ENCODE measurements at regions of chr17 and their contacts with region 1.

Region 1: DNA sequence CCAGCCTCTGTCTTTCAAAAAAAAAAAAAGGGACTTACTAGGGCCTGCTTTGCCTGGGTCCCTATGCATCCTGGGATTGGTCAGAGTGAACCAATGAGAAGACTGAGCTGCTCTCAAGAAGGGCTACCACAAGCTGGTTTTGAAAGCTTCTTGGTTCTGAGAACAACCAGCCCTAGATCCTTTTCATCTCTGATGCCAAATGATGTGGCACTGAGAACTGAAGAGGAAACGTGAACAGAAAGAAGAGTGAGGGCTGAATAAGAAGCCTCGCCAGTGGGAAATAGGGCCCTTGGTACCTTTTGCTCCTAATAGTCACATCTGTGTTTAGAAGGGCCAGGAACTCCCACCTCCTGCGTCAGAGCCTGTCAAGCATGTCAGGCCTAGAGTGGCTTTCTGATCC is 10.7 kb downstream of the TACO1 start:
- DNase-seq: no peak
- ATAC-seq: no peak
- H3K4me3 ChIP-seq: no peak overlapping the region
- H3K4me3 Mint-ChIP-seq: no peak overlapping the region
- H3K27ac ChIP-seq: no peak overlapping the region
- H3K27ac Mint-ChIP-seq: no peak overlapping the region
- H3K4me1 ChIP-seq: no peaks in the 10 kb centered on the region
- H3K4me1 Mint-ChIP-seq: no peaks in the 10 kb centered on the region
- H3K27me3 ChIP-seq: no peaks in the 10 kb centered on the region
- H3K27me3 Mint-ChIP-seq: no peaks in the 10 kb centered on the region
- CTCF ChIP-seq: no peak

Region 2: GRCh38 chr17:63425482-63425881 is 185.9 kb before region 1 on chr17:
- CTCF ChIA-PET with region 1: interaction called, 158 read pairs
- POLR2A ChIA-PET with region 1: no interaction called
- intact Hi-C with region 1: no loop called
- DNase-seq: peak; percentile 82
- ATAC-seq: peak; percentile 81
- H3K4me3 ChIP-seq: no peak overlapping the region
- H3K4me3 Mint-ChIP-seq: no peak overlapping the region
- H3K27ac ChIP-seq: no peak overlapping the region
- H3K27ac Mint-ChIP-seq: no peak overlapping the region
- H3K4me1 ChIP-seq: peaks cover 0 to 5% of the 10 kb centered on the region in 2 donors
- H3K4me1 Mint-ChIP-seq: peaks cover 12% of the 10 kb centered on the region
- H3K27me3 ChIP-seq: no peaks in the 10 kb centered on the region
- H3K27me3 Mint-ChIP-seq: peaks cover 10% of the 10 kb centered on the region
- CTCF ChIP-seq: peak; percentile 100

Region 3: DNA sequence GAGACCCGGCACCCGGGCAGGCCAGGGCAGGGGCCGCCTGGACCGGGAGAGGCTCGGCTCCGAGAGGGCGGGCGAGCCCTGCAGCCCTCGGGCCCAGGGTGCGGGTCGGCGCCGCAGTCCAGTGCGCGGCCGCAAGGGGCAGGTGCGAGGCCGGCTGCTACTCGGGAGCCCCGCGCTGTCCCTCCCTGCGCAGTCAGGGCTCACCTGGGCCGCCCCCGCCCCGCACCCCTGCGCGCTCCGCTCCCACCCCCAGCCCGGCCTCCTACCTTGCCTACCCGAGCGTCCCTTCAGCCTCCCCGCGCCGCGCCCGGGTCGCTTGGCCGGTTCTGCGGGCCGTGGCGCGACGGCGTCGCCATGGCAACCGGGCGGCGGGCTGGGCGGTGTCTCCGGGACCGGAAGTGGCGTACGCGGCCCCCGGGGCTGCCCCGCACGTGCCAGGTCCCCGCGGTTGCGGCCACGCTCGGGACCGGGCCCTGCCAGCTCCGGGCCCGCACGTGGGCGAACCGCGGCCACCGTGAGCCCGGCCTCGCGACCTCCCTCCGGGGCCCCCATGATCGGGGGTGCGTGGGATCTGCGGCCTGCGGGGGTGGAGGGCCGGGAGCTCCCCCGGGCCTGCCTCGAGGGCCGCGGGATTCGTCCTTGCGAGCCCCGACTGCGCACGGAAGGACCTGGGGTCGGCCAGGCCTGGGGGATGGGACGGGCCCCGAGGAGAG is 165.2 kb before region 1 on chr17 and contains the start of gene CYB561:
- CTCF ChIA-PET with region 1: interaction called, 11 read pairs
- POLR2A ChIA-PET with region 1: no interaction called
- intact Hi-C with region 1: no loop called
- DNase-seq: peak; percentile 94
- ATAC-seq: peak; percentile 73
- H3K4me3 ChIP-seq: peak within 1 kb of the TSS in 4 of 5 experiments; percentile 54 to 70 (median 61)
- H3K4me3 Mint-ChIP-seq: peak within 1 kb of the TSS; percentile 77
- H3K27ac ChIP-seq: peak within 1 kb of the TSS; percentile 38 to 79
- H3K27ac Mint-ChIP-seq: peak within 1 kb of the TSS; percentile 81
- H3K4me1 ChIP-seq: peaks cover 13 to 24% of the 10 kb centered on the region in 2 donors
- H3K4me1 Mint-ChIP-seq: peaks cover 15% of the 10 kb centered on the region
- H3K27me3 ChIP-seq: peaks cover 0 to 2% (median 0%) of the 10 kb centered on the region in 4 experiments
- H3K27me3 Mint-ChIP-seq: peaks cover 6% of the 10 kb centered on the region
- CTCF ChIP-seq: peak; percentile 59
- total RNA-seq, gene CYB561: 3.6 and 4.9 TPM in 2 replicates

Region 4: DNA sequence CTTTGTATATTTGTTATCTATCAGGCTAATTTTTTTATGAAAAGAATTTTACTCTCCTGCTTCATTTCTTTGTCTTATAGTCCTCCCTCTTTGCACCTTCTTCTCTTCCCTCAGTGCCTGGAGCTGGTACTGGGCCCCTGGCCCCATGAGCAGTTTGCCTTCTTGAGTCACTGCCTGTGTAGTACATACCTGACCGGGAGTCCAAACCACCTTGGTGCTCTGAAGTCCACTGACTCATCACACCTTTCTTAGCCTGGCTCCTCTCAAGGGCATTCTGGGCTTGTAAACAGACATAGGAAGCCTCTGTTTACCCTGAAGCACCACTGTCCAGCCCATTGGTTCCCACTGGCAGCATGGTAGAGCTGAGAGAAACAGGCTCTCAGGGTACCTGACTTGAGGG is 21.7 kb before region 1 on chr17:
- CTCF ChIA-PET with region 1: interaction called, 13 read pairs
- POLR2A ChIA-PET with region 1: no interaction called
- intact Hi-C with region 1: no loop called
- DNase-seq: no peak
- ATAC-seq: no peak
- H3K4me3 ChIP-seq: no peak overlapping the region
- H3K4me3 Mint-ChIP-seq: no peak overlapping the region
- H3K27ac ChIP-seq: no peak overlapping the region
- H3K27ac Mint-ChIP-seq: no peak overlapping the region
- H3K4me1 ChIP-seq: no peaks in the 10 kb centered on the region
- H3K4me1 Mint-ChIP-seq: no peaks in the 10 kb centered on the region
- H3K27me3 ChIP-seq: no peaks in the 10 kb centered on the region
- H3K27me3 Mint-ChIP-seq: no peaks in the 10 kb centered on the region
- CTCF ChIP-seq: no peak

Region 5: DNA sequence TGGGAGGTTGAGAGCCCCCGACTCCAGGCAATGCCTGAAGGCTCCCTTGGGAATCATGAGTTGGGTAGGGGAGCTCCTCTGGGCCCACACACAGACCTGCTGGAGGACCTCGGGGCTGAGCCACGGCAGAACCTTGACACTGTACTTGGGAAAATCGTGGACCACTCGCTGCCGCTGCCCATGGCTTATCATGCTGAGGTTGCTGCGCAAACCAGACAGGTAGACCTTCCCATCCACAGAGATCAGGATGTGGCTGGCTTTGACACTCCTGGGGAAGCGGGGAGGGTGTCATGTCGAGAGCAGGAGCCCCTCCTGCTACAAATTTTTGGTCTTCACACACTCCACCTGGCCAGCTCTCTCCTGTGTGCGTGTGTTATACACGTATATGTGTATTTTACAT is 95.8 kb after region 1 on chr17:
- CTCF ChIA-PET with region 1: interaction called, 32 read pairs
- POLR2A ChIA-PET with region 1: interaction called, 3 read pairs
- intact Hi-C with region 1: loop called (anchors 1 kb)
- DNase-seq: no peak
- ATAC-seq: no peak
- H3K4me3 ChIP-seq: no peak overlapping the region
- H3K4me3 Mint-ChIP-seq: no peak overlapping the region
- H3K27ac ChIP-seq: peak overlapping the region in 1 of 2 donors; percentile 75
- H3K27ac Mint-ChIP-seq: peak overlapping the region; percentile 92
- H3K4me1 ChIP-seq: peaks cover 51 to 56% of the 10 kb centered on the region in 2 donors
- H3K4me1 Mint-ChIP-seq: peaks cover 67% of the 10 kb centered on the region
- H3K27me3 ChIP-seq: no peaks in the 10 kb centered on the region
- H3K27me3 Mint-ChIP-seq: no peaks in the 10 kb centered on the region
- CTCF ChIP-seq: no peak

Region 6: GRCh38 chr17:63785556-63785955 is 174.2 kb after region 1 on chr17:
- CTCF ChIA-PET with region 1: no interaction called
- POLR2A ChIA-PET with region 1: no interaction called
- intact Hi-C with region 1: no loop called
- DNase-seq: no peak
- ATAC-seq: no peak
- H3K4me3 ChIP-seq: no peak overlapping the region
- H3K4me3 Mint-ChIP-seq: no peak overlapping the region
- H3K27ac ChIP-seq: no peak overlapping the region
- H3K27ac Mint-ChIP-seq: no peak overlapping the region
- H3K4me1 ChIP-seq: peaks cover 0 to 6% of the 10 kb centered on the region in 2 donors
- H3K4me1 Mint-ChIP-seq: peaks cover 28% of the 10 kb centered on the region
- H3K27me3 ChIP-seq: no peaks in the 10 kb centered on the region
- H3K27me3 Mint-ChIP-seq: no peaks in the 10 kb centered on the region
- CTCF ChIP-seq: no peak

Region 7: DNA sequence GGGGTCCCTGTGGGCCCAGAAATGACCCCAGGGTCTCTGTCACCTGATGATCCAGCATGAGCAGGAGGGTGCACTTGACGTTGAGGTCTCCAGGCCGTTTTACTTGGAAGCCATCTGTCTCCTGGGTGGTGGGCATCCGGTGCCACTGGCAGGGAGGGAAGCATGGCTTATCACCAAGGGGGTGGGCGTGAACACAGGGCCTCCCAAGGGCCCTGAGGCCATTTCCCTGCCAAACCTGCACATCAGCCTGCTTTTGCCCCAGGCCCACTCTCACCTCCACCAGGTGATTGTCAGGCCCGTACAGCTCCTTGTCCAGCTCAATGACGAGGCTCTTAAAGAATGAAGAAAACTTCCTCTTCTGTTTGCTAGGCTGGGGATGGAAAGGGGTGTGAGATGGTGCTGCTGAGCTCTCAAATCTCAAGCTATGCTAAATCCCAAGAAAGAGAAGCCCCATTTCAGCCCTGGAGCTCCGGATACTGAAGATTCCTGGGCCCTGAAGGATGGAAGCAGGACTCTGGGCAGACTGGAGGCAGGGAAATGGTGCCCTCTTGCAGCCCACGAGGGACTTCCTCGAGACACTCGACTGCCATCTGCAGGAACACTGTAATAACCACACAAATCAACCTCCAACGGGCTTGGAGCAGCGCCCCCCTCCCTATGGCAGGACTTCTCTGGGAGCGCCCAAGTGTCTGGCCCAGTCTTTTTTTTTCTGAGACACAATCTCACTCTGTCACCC is 223.2 kb after region 1 on chr17:
- CTCF ChIA-PET with region 1: interaction called, 12 read pairs
- POLR2A ChIA-PET with region 1: no interaction called
- intact Hi-C with region 1: no loop called
- DNase-seq: peak; percentile 77
- ATAC-seq: peak; percentile 86
- H3K4me3 ChIP-seq: no peak overlapping the region
- H3K4me3 Mint-ChIP-seq: no peak overlapping the region
- H3K27ac ChIP-seq: peak overlapping the region in 1 of 2 donors; percentile 13
- H3K27ac Mint-ChIP-seq: peak overlapping the region; percentile 72
- H3K4me1 ChIP-seq: peaks cover 26 to 36% of the 10 kb centered on the region in 2 donors
- H3K4me1 Mint-ChIP-seq: peaks cover 45% of the 10 kb centered on the region
- H3K27me3 ChIP-seq: no peaks in the 10 kb centered on the region
- H3K27me3 Mint-ChIP-seq: no peaks in the 10 kb centered on the region
- CTCF ChIP-seq: peak; percentile 73